ENCODE measurements at regions of chr12 and their contacts with region 1.

Region 1: GRCh38 chr12:121697098-121697698 is 15.4 kb upstream of the TMEM120B start:
- DNase-seq: peak; percentile 61
- H3K4me3 Mint-ChIP-seq: no peak overlapping the region
- H3K27ac Mint-ChIP-seq: no peak overlapping the region
- H3K4me1 Mint-ChIP-seq: no peaks in the 10 kb centered on the region
- H3K27me3 Mint-ChIP-seq: no peaks in the 10 kb centered on the region
- CTCF ChIP-seq: peak; percentile 54

Region 2: DNA sequence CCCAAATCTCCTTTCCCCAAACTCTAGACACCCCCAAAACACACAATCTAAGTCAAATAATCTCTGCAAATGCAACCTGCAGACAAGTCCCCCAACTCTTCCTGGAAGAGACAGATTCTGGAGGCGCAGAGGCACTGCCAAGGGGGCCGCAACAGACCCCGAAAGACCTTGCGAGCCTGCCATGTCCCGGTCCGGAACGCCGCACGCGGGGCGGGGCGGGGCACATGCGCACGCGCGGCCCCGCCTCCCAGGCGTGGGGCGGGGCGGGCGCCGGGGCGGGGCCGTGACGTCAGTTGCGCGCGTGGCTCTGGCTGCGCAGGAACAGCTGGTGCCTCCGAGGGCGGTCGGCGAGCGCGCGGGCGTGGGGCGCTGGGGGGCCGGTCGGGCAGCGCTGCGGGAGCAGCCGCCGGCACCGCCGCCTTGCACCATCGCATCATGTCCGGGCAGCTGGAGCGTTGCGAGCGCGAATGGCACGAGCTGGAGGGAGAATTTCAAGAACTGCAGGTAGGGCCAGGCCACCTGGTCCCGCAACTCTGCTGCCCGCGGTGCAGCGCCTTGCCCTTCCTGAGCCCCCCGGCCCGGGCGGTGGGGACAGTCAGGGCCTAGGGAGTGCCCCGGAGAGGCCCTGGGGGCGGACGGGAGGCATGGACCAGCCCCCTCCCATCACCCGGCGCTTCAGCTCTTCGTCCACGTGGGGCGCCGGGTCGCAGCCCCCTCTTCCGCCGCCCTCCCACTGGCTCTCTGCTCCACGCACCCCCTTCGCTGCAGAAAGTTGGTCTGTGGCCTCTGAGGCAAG is 15.5 kb after region 1 on chr12 and contains the start of gene TMEM120B:
- CTCF ChIA-PET with region 1: interaction called, 7 read pairs
- POLR2A ChIA-PET with region 1: interaction called, 21 read pairs
- intact Hi-C with region 1: no loop called
- DNase-seq: peak; percentile 70
- H3K4me3 Mint-ChIP-seq: peak within 1 kb of the TSS; percentile 95
- H3K27ac Mint-ChIP-seq: peak within 1 kb of the TSS; percentile 57
- H3K4me1 Mint-ChIP-seq: peaks cover 23% of the 10 kb centered on the region
- H3K27me3 Mint-ChIP-seq: no peaks in the 10 kb centered on the region
- CTCF ChIP-seq: no peak
- total RNA-seq, gene TMEM120B: 10.5 and 14.2 TPM in 2 replicates

Region 3: DNA sequence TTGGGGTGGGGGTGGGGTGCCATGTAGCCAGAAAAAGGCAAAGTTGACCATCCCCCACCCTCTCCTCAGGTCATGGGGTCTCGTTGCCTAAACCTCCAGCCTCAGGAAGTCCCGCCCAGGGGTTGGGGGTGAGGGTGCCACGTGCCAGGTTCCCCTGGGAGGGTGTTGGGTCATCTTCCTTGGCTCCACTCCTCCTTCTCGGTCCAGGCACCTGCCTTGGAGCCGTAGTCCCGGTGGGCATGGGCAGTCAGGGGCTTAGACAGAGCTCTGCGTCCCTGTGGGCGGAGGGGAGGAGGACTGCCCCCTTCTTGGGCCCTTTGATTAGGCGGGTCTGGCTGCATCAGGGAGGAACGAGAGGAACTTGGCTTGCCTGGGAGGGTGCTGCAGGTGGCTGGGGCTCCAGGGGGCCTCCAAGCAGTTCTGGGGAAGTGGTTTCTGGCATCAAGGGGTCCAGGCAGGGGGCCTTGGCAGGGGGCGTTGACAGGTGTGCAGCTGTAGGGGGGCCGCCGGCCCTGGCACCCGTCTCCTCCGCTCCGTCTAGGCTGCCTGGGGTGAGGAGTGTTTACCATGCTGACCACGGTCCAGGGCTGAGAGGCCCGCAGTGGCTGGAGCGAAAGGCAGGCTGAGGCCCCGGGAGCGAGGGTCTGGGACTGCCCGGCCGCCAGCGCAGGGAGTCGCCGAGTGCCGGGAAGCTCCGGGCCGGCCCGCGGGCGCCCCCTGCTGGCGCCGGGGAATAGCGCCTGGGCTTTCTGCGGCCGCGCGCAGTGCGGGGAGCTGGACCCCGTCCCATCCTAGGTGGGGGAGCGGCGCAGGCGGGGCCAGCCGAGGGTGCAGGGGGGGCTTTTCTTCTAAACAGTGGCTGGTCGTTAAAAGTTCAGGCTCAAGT is 114.5 kb after region 1 on chr12:
- CTCF ChIA-PET with region 1: interaction called, 14 read pairs
- POLR2A ChIA-PET with region 1: no interaction called
- intact Hi-C with region 1: no loop called
- DNase-seq: peak; percentile 61
- H3K4me3 Mint-ChIP-seq: peak overlapping the region; percentile 82
- H3K27ac Mint-ChIP-seq: no peak overlapping the region
- H3K4me1 Mint-ChIP-seq: peaks cover 28% of the 10 kb centered on the region
- H3K27me3 Mint-ChIP-seq: no peaks in the 10 kb centered on the region
- CTCF ChIP-seq: peak; percentile 99

Region 4: DNA sequence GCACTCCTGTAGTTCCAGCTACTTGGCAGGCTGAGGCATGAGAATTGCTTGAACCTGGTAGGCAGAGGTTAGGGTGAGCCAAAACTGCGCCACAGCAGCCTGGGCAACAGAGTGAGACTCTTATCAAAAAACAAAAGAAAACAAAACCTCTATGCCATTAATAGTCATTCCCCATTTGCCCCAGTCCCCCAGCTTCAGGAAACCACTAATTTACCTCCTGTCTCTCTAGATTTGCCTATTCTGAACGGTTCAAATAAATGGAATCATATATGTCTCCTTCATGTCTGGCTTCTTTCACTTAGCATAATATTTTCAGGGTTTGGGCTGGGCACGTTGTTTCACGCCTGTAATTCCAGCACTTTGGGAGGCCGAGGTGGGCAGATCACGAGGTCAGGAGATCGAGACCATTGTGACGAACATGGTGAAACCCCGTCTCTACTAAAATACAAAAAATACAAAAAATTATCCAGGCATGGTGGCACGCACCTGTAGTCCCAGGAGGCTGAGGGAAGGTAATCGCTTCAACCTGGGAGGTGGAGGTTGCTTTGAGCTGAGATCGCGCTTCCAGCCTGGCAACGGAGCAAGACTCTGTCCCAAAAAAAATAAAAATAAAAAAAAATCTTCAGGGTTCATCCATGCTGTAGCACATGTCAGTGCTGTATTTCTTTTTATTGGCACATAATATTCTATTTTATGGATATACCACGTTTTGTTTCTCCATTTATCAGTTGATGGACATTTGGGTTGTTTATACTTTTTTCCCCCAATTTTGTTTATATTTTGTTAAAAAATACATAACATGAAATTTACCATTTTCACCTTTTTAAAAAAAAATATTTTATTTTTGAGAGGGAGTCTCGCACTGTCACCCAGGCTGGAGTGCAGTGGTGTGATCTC is 861.8 kb after region 1 on chr12:
- CTCF ChIA-PET with region 1: no interaction called
- POLR2A ChIA-PET with region 1: no interaction called
- intact Hi-C with region 1: no loop called
- DNase-seq: no peak
- H3K4me3 Mint-ChIP-seq: no peak overlapping the region
- H3K27ac Mint-ChIP-seq: no peak overlapping the region
- H3K4me1 Mint-ChIP-seq: no peaks in the 10 kb centered on the region
- H3K27me3 Mint-ChIP-seq: no peaks in the 10 kb centered on the region
- CTCF ChIP-seq: no peak